ENCODE measurements at regions of chr10 and their contacts with region 1.

Region 1: DNA sequence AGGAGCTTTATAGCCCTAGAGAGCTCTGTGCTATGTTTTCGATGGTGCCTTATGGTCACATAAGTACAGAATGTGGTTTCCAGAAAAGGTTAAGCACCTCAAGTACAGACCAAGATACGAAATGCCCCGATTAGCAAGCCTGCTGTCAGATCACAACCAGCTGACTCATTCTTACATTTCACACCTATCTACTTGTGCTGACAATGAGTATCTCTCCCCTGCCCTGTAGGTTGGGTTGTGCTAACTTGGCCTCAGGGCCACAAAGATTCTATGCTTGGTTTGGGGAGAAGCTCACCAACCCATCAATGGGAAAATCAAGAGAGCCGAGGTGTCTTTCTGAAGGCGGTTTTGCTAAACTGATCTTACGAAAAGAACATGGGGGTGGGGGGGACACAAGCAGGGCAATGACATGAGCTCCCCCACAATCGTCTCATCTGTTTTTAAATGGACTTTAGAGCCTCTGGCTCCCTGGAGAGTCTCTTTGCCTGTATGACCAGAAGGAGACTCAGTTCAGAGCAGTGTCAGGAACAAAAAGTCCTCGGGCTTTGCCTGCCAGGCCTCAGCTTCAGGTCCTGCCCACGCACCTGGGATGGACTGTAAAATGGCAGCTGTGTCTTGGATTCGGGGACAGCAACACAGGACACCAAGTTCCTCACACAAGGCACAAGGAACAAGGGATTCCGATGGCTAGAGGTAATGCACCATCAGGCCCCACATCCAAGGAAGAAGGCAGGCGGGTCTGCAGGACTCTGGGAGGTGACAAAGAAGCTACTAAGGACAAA is 55.1 kb downstream of the FAM53B start:
- DNase-seq: peak in 8 of 9 experiments; percentile 19 to 91 (median 60)
- ATAC-seq: peak; percentile 84
- H3K4me3 ChIP-seq: no peak overlapping the region
- H3K4me3 Mint-ChIP-seq: peak overlapping the region; percentile 47
- H3K27ac ChIP-seq: peak overlapping the region; percentile 12 to 72
- H3K27ac Mint-ChIP-seq: peak overlapping the region; percentile 87
- H3K4me1 ChIP-seq: peaks cover 72% of the 10 kb centered on the region
- H3K4me1 Mint-ChIP-seq: peaks cover 81% of the 10 kb centered on the region
- H3K27me3 ChIP-seq: no peaks in the 10 kb centered on the region
- H3K27me3 Mint-ChIP-seq: no peaks in the 10 kb centered on the region
- CTCF ChIP-seq: no peak

Region 2: GRCh38 chr10:124671486-124672075 is 17.5 kb before region 1 on chr10:
- CTCF ChIA-PET with region 1: interaction called, 19 read pairs
- POLR2A ChIA-PET with region 1: interaction called, 25 read pairs
- intact Hi-C with region 1: no loop called
- DNase-seq: peak in 2 of 9 experiments; percentile 44 to 70
- ATAC-seq: peak; percentile 44
- H3K4me3 ChIP-seq: peak overlapping the region; percentile 1 to 2
- H3K4me3 Mint-ChIP-seq: peak overlapping the region; percentile 60
- H3K27ac ChIP-seq: peak overlapping the region; percentile 9 to 69
- H3K27ac Mint-ChIP-seq: peak overlapping the region; percentile 84
- H3K4me1 ChIP-seq: peaks cover 83% of the 10 kb centered on the region
- H3K4me1 Mint-ChIP-seq: peaks cover 77% of the 10 kb centered on the region
- H3K27me3 ChIP-seq: no peaks in the 10 kb centered on the region
- H3K27me3 Mint-ChIP-seq: no peaks in the 10 kb centered on the region
- CTCF ChIP-seq: no peak

Region 3: GRCh38 chr10:124677749-124678556 is 11.1 kb before region 1 on chr10:
- CTCF ChIA-PET with region 1: interaction called, 19 read pairs
- POLR2A ChIA-PET with region 1: interaction called, 25 read pairs
- intact Hi-C with region 1: no loop called
- DNase-seq: peak in 1 of 9 experiments; percentile 41
- ATAC-seq: peak; percentile 26
- H3K4me3 ChIP-seq: peak overlapping the region; percentile 27 to 40
- H3K4me3 Mint-ChIP-seq: peak overlapping the region; percentile 76
- H3K27ac ChIP-seq: peak overlapping the region in 1 of 2 experiments; percentile 57
- H3K27ac Mint-ChIP-seq: peak overlapping the region; percentile 91
- H3K4me1 ChIP-seq: peaks cover 86% of the 10 kb centered on the region
- H3K4me1 Mint-ChIP-seq: peaks cover 86% of the 10 kb centered on the region
- H3K27me3 ChIP-seq: no peaks in the 10 kb centered on the region
- H3K27me3 Mint-ChIP-seq: no peaks in the 10 kb centered on the region
- CTCF ChIP-seq: no peak

Region 4: DNA sequence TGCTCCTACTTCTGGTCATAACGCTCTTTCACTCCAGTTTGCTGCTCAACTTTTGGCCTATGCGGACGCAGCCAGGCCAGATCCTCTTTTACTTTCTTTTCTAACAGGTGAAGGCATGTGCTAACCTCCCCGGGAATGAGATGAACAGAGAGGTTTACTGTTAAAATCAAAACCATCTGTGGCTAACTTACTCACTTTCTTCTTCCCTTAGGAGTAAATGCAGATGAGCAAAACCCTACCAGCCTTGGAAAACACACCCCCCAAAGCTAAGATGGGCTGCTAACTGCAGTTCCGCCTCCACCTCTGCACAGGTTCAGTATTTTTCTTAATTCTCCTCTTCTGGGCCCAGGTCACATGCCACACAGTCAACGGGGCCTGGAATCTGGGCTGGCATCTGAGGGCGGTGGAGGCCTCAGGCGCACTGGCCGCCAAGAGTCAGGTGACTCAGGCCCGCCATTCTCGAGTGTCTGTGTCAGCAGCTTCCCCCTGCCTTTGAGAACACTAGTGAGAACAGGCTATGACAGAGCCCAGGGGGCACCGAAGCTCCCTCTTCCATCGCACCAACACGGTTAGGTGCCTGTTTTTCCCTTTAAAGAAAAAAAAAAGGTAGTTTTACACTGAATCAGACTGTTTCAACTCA is 44.0 kb after region 1 on chr10:
- CTCF ChIA-PET with region 1: no interaction called
- POLR2A ChIA-PET with region 1: interaction called, 4 read pairs
- intact Hi-C with region 1: loop called in 1 of 2 experiments (anchors 5 kb)
- DNase-seq: peak in 6 of 9 experiments; percentile 52 to 72 (median 55)
- ATAC-seq: peak; percentile 48
- H3K4me3 ChIP-seq: peak overlapping the region in 1 of 2 experiments; percentile 21
- H3K4me3 Mint-ChIP-seq: peak overlapping the region; percentile 63
- H3K27ac ChIP-seq: peak overlapping the region; percentile 16 to 75
- H3K27ac Mint-ChIP-seq: peak overlapping the region; percentile 84
- H3K4me1 ChIP-seq: peaks cover 88% of the 10 kb centered on the region
- H3K4me1 Mint-ChIP-seq: peaks cover 94% of the 10 kb centered on the region
- H3K27me3 ChIP-seq: no peaks in the 10 kb centered on the region
- H3K27me3 Mint-ChIP-seq: no peaks in the 10 kb centered on the region
- CTCF ChIP-seq: no peak

Measured in CD8-positive, alpha-beta T cell (primary cell).